Heart left ventricle (tissue), 16 donors: ENCODE measurements at regions of chr7 and their contacts with region 1.

Region 1: DNA sequence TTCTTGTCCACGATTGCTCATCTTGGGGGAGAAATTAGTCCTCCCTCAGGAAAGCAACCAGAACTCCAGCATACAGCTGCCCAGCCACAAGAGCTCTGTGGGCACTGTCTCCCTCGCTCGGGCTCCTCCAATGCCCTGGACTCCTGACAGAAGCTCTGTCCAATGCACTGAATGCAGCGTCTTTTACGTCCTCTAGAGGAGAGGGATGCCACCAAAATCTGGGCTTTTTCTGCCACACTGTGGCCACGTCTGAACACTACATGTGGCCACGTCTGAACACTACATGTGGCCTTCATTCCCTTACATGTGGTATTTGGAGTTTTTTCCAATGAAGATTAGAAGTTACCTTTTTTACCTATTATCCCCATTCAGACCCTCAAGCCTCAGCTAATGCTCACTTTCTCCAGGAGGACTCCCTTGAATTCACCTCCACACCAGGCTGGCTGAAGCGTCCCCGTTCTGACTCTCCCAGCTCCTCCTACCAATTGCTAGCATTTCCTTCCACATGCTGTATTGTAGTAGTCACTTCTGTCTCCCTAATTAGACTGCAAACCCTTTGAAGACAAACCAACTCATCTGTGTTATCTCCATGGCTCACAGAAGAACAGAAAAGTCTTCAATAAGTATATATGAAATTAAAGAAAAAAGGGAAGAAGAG is 134.3 kb upstream of the PDE1C start:
- DNase-seq: peak; percentile 68 to 80 (median 72)
- ATAC-seq: peak; percentile 92 to 97 (median 94)
- H3K4me3 ChIP-seq: peak overlapping the region in 11 of 12 donors; percentile 5 to 52 (median 38)
- H3K27ac ChIP-seq: peak overlapping the region in 2 of 12 donors; percentile 3 to 5
- H3K4me1 ChIP-seq: peaks cover 0 to 10% (median 0%) of the 10 kb centered on the region in 12 donors
- H3K27me3 ChIP-seq: no peaks in the 10 kb centered on the region
- CTCF ChIP-seq: peak; percentile 58 to 88 (median 74)
- POLR2A ChIP-seq: no peak

Region 2: GRCh38 chr7:31443457-31443856 is 761.0 kb before region 1 on chr7:
- intact Hi-C with region 1: loop called in 2 of 10 experiments (anchors 5 to 10 kb)
- DNase-seq: no peak
- ATAC-seq: peak in 2 of 4 donors; percentile 55 to 62
- H3K4me3 ChIP-seq: no peak overlapping the region
- H3K27ac ChIP-seq: no peak overlapping the region
- H3K4me1 ChIP-seq: no peaks in the 10 kb centered on the region
- H3K27me3 ChIP-seq: peaks cover 0 to 30% (median 3%) of the 10 kb centered on the region in 9 donors
- CTCF ChIP-seq: peak; percentile 62 to 86 (median 76)
- POLR2A ChIP-seq: no peak

Region 3: DNA sequence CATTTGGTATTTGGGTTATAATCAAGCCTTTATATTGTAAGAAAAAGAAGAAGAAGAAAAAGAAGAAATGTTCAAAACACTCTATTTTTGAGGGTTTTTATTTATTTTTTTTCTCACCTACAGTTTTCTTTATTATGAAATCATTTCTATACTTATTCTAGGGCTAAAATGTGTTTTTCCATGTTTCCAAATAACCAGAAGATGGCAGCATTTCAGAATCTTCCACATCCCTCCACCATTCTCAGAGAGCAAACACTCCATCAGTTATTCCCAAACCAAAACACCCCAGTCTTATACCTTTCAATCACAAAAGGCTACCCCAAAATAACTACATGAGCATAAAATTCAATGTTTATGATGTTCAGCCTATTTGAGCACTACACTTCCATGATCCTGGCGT is 556.2 kb before region 1 on chr7:
- intact Hi-C with region 1: loop called in 3 of 10 experiments (anchors 5 kb)
- DNase-seq: no peak
- ATAC-seq: no peak
- H3K4me3 ChIP-seq: no peak overlapping the region
- H3K27ac ChIP-seq: no peak overlapping the region
- H3K4me1 ChIP-seq: no peaks in the 10 kb centered on the region
- H3K27me3 ChIP-seq: no peaks in the 10 kb centered on the region
- CTCF ChIP-seq: peak in 8 of 12 donors; percentile 10 to 39 (median 32)
- POLR2A ChIP-seq: no peak

Region 4: GRCh38 chr7:31744294-31744874 is 460.1 kb before region 1 on chr7:
- intact Hi-C with region 1: loop called (anchors 1 to 5 kb)
- DNase-seq: peak; percentile 18 to 65 (median 54)
- ATAC-seq: peak in 3 of 4 donors; percentile 59 to 78 (median 67)
- H3K4me3 ChIP-seq: no peak overlapping the region
- H3K27ac ChIP-seq: no peak overlapping the region
- H3K4me1 ChIP-seq: no peaks in the 10 kb centered on the region
- H3K27me3 ChIP-seq: no peaks in the 10 kb centered on the region
- CTCF ChIP-seq: peak; percentile 64 to 92 (median 88)
- POLR2A ChIP-seq: no peak

Region 5: DNA sequence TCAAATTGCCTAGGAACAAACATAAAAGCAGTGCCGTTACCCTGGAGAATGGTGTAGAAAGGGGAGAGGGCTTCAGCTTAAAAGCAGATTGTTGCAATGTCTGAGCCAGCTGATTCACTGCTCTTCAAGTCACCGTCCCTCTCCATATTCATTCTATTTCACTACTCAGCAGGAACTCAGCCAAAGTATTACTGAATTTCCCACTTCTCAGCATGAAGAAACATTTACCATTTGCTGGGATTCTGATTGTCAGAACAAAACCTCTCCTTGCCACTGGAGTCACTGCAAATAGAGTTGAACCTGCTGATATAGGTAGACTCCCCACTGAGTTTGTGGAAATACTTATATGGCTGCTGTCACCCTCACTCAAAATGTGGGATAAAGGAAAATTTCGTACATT is 445.7 kb before region 1 on chr7:
- intact Hi-C with region 1: no loop called
- DNase-seq: no peak
- ATAC-seq: no peak
- H3K4me3 ChIP-seq: no peak overlapping the region
- H3K27ac ChIP-seq: no peak overlapping the region
- H3K4me1 ChIP-seq: peaks cover 0 to 6% (median 0%) of the 10 kb centered on the region in 12 donors
- H3K27me3 ChIP-seq: no peaks in the 10 kb centered on the region
- CTCF ChIP-seq: no peak
- POLR2A ChIP-seq: no peak

Region 6: GRCh38 chr7:31776616-31777015 is 427.9 kb before region 1 on chr7:
- intact Hi-C with region 1: loop called in 1 of 10 experiments (anchors 10 kb)
- DNase-seq: no peak
- ATAC-seq: no peak
- H3K4me3 ChIP-seq: no peak overlapping the region
- H3K27ac ChIP-seq: no peak overlapping the region
- H3K4me1 ChIP-seq: peaks cover 0 to 11% (median 0%) of the 10 kb centered on the region in 12 donors
- H3K27me3 ChIP-seq: no peaks in the 10 kb centered on the region
- CTCF ChIP-seq: no peak
- POLR2A ChIP-seq: no peak

Region 7: DNA sequence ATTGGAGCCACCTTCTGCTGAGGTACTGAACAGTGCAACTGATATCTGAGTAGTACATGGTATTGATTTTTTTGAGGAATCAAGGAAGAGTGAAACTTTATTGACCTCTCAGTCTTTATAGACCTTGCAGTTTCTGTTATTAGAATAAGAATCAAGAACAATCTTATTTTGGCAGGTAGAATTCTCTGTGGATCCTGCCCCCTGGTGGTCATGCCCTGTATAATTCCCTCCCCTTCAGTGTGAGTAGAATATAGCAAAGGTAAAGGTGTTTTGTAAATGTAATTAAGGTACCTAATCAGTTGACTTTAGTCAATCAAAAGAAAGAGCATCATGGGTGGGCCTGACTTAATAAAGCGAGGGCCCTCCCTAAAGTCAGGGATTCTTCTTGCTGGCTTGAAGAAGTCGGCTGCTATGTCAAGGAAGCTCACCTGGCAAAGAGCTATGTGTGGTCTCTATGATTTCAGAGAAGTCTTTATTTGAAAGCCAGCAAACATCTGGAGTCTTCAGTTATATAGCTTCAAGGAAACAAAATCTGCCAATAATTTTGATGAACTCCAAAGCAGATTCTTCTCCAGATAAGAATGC is 142.8 kb after region 1 on chr7:
- intact Hi-C with region 1: loop called in 2 of 10 experiments (anchors 5 kb)
- DNase-seq: no peak
- ATAC-seq: no peak
- H3K4me3 ChIP-seq: no peak overlapping the region
- H3K27ac ChIP-seq: no peak overlapping the region
- H3K4me1 ChIP-seq: no peaks in the 10 kb centered on the region
- H3K27me3 ChIP-seq: no peaks in the 10 kb centered on the region
- CTCF ChIP-seq: peak; percentile 45 to 76 (median 66)
- POLR2A ChIP-seq: no peak

Region 8: DNA sequence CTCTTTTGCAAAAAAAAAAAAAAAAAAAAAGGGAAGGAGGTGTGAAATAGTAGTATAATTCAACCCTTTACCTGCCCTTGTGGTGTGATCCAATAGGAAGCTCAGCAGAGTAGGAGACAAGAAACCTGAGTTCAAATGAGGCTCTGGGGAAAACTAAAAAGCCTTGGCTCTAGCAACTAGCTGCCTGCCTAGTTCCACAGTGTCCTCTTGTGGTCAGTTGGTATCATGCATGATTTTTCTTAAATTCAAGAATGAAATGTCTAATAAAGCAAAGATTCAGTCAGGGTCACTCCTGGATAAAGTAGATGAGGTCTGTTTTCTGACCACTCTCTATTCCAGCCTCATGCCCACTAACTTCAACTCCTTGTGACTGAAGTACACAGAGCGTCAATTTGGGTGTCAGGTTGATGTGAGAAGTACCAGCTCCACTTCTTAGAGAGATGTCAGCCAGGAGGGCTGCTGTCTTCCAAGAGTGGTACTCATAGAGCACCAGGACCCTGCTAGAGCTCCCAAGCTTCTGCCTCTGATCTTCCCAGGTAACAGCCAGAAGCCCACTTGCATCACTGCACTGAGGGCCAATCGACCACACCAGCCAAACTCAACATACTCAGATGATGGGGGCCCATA is 275.2 kb after region 1 on chr7:
- intact Hi-C with region 1: loop called in 1 of 10 experiments (anchors 5 kb)
- DNase-seq: no peak
- ATAC-seq: peak in 1 of 4 donors; percentile 58
- H3K4me3 ChIP-seq: no peak overlapping the region
- H3K27ac ChIP-seq: no peak overlapping the region
- H3K4me1 ChIP-seq: peaks cover 0 to 14% (median 0%) of the 10 kb centered on the region in 12 donors
- H3K27me3 ChIP-seq: no peaks in the 10 kb centered on the region
- CTCF ChIP-seq: peak; percentile 60 to 84 (median 66)
- POLR2A ChIP-seq: no peak